Common myeloid progenitor, CD34-positive (primary cell): ENCODE measurements at regions of chr7 and their contacts with region 1.

Region 1: DNA sequence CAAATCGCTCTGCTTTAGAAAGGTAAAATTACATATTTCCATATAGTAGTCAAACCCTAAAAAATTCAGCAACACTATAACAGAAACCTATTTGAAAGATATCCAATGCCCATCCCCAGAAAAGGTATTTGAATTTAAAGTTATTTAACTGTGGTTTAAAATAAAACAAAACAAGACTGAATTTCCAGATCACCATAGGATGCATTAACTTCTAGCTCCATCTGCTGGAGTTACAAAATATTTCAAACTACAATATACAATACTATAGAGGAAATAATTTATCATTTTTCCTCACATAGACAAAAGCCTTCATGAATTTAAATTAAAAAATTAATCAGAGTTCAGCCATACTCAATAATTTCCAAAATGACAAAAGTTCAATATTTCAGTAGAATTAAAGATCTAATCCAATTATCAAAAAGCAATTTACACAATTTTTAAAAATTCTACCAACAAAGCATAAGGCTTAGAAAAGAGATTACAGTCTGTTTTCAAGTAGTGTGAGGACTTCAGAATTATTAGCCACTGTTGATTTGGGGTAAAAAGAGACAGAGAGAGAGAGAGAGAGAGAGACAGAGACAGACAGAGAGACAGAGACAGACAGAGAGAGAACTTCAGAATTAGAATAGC is 75.9 kb downstream of the LMBR1 start:
- DNase-seq: peak; percentile 24 to 56 (median 56)
- H3K4me3 ChIP-seq: no peak overlapping the region
- H3K27ac ChIP-seq: no peak overlapping the region
- H3K4me1 ChIP-seq: no peaks in the 10 kb centered on the region
- H3K27me3 ChIP-seq: no peaks in the 10 kb centered on the region

Region 2: DNA sequence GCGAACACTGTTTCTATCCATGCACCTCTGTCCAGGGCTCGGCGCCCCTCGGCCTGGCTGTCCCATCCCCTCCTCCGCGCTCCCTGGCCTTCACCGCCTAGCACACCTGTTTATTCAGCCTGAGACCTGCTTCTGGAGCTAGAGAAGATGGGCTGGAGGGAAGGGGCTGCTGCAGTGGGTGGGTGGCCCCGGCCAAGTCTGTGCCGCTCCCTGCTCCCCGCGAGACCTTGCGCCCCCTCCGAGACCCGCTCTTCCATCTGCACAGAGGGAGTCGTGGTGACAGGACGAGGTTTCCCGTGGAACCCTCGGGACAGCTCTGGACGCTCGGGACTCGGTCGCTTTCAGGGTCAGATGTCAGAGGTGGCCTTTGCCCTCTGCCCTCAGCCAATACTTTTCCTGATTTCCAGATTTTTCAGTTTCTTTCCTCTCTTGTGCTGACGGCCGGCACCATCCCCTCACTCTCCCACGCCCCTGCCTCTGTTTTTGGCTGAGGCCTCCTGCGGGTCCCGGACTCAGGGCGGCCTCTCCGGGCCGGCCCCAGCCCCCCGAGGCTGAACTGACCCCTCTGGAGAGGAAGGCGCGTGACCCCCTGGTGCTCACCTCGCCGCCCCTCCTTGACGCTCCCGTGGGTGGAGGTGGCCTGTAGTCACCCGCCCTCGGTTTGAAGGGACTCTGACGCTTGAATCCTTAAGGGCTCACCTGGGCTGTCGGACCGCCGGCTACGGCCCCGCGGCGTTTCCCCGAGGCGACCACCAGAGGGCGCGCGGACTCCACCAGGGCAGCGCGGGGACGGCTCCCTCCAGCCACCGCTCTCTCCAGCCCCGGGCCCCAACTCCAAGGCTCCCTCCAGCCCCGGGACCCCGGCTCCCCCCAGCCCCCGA is 1020.4 kb before region 1 on chr7:
- CTCF ChIA-PET with region 1: interaction called, 10 read pairs
- POLR2A ChIA-PET with region 1: no interaction called
- DNase-seq: peak in 2 of 3 donors; percentile 52 to 57
- H3K4me3 ChIP-seq: no peak overlapping the region
- H3K27ac ChIP-seq: no peak overlapping the region
- H3K4me1 ChIP-seq: peaks cover 4 to 21% (median 19%) of the 10 kb centered on the region in 4 experiments
- H3K27me3 ChIP-seq: peaks cover 4 to 67% (median 21%) of the 10 kb centered on the region in 5 experiments